Left ventricle myocardium inferior (tissue), 1 donor: ENCODE measurements at regions of chr16 and their contacts with region 1.

Region 1: DNA sequence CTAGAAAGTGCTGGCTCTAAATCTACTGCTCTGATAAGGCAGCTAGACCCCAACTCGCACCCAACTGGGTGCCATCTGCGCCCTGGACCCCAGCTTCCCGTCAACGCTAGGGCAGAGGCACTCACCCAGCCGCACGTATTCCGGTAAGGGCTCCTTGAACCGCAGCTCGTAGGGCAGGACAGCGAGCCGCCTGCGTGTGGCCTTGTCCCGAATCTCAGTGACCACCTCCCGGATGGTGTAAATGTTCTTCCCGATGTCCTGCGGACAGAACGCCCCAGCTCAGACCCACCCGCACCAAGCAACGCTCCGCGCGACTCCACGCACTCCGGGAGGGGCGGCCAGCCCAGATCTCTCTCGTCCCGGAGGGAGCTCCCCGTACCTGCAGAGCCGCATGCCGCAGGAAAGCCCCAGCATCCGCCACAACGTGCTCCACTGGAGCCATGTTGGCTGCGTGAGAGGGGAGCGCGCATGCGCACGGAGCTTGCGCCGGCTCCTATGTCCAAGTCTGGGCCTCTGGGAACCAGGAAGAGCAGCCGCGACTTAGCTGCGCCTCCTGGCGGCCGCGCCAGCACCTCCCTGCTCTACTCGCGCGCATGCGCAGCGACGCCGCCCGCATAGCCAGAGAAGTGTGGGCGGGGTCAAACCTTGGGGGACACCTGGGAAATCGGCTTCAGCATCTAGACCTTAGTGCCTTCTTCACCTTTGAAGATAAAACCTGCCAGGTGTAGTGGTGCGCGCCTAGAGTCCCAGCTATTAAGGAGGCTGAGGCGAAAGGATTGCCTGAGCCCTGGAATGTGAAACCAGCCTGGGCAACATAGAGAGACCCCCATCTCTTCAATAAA is at the start of gene NOB1:
- DNase-seq: peak; percentile 95
- H3K4me3 ChIP-seq: peak within 1 kb of the TSS; percentile 93
- H3K27ac ChIP-seq: peak within 1 kb of the TSS; percentile 79
- H3K4me1 ChIP-seq: peaks cover 23% of the 10 kb centered on the region
- H3K27me3 ChIP-seq: no peaks in the 10 kb centered on the region
- CTCF ChIP-seq: peak; percentile 98
- total RNA-seq, gene NOB1: 14.7 TPM

Region 2: GRCh38 chr16:69709456-69710084 is 45.1 kb before region 1 on chr16:
- intact Hi-C with region 1: loop called (anchors 5 kb)
- DNase-seq: no peak
- H3K4me3 ChIP-seq: no peak overlapping the region
- H3K27ac ChIP-seq: peak overlapping the region; percentile 42
- H3K4me1 ChIP-seq: peaks cover 7% of the 10 kb centered on the region
- H3K27me3 ChIP-seq: no peaks in the 10 kb centered on the region
- CTCF ChIP-seq: peak; percentile 78

Region 3: GRCh38 chr16:69796351-69797118 is 41.8 kb after region 1 on chr16:
- intact Hi-C with region 1: no loop called
- DNase-seq: no peak
- H3K4me3 ChIP-seq: peak overlapping the region; percentile 48
- H3K27ac ChIP-seq: no peak overlapping the region
- H3K4me1 ChIP-seq: peaks cover 7% of the 10 kb centered on the region
- H3K27me3 ChIP-seq: no peaks in the 10 kb centered on the region
- CTCF ChIP-seq: peak; percentile 93